Activated B cell treated with CpG ODN at 0.5 μM for 24 hours (primary cell): ENCODE measurements at regions of chr10 and their contacts with region 1.

Region 1: GRCh38 chr10:4656576-4657182 is 169.3 kb upstream of the AKR1E2 start:
- DNase-seq: no peak
- ATAC-seq: peak; percentile 52
- H3K4me3 Mint-ChIP-seq: no peak overlapping the region
- H3K27ac Mint-ChIP-seq: no peak overlapping the region
- H3K4me1 Mint-ChIP-seq: peaks cover 5% of the 10 kb centered on the region
- H3K27me3 Mint-ChIP-seq: peaks cover 2% of the 10 kb centered on the region
- CTCF ChIP-seq: no peak

Region 2: GRCh38 chr10:3197348-3198003 is 1459.2 kb before region 1 on chr10:
- CTCF ChIA-PET with region 1: interaction called, 6 read pairs
- POLR2A ChIA-PET with region 1: no interaction called
- intact Hi-C with region 1: loop called (anchors 1 kb)
- DNase-seq: peak; percentile 27
- ATAC-seq: no peak
- H3K4me3 Mint-ChIP-seq: no peak overlapping the region
- H3K27ac Mint-ChIP-seq: no peak overlapping the region
- H3K4me1 Mint-ChIP-seq: peaks cover 7% of the 10 kb centered on the region
- H3K27me3 Mint-ChIP-seq: peaks cover 35% of the 10 kb centered on the region
- CTCF ChIP-seq: peak; percentile 17

Region 3: GRCh38 chr10:3393958-3394357 is 1262.7 kb before region 1 on chr10:
- CTCF ChIA-PET with region 1: no interaction called
- POLR2A ChIA-PET with region 1: no interaction called
- intact Hi-C with region 1: loop called (anchors 1 kb)
- DNase-seq: no peak
- ATAC-seq: peak; percentile 34
- H3K4me3 Mint-ChIP-seq: no peak overlapping the region
- H3K27ac Mint-ChIP-seq: no peak overlapping the region
- H3K4me1 Mint-ChIP-seq: peaks cover 22% of the 10 kb centered on the region
- H3K27me3 Mint-ChIP-seq: peaks cover 1% of the 10 kb centered on the region
- CTCF ChIP-seq: no peak

Region 4: GRCh38 chr10:3623746-3624145 is 1032.9 kb before region 1 on chr10:
- CTCF ChIA-PET with region 1: no interaction called
- POLR2A ChIA-PET with region 1: no interaction called
- intact Hi-C with region 1: loop called (anchors 10 kb)
- DNase-seq: no peak
- ATAC-seq: peak; percentile 40
- H3K4me3 Mint-ChIP-seq: no peak overlapping the region
- H3K27ac Mint-ChIP-seq: no peak overlapping the region
- H3K4me1 Mint-ChIP-seq: peaks cover 32% of the 10 kb centered on the region
- H3K27me3 Mint-ChIP-seq: no peaks in the 10 kb centered on the region
- CTCF ChIP-seq: no peak

Region 5: DNA sequence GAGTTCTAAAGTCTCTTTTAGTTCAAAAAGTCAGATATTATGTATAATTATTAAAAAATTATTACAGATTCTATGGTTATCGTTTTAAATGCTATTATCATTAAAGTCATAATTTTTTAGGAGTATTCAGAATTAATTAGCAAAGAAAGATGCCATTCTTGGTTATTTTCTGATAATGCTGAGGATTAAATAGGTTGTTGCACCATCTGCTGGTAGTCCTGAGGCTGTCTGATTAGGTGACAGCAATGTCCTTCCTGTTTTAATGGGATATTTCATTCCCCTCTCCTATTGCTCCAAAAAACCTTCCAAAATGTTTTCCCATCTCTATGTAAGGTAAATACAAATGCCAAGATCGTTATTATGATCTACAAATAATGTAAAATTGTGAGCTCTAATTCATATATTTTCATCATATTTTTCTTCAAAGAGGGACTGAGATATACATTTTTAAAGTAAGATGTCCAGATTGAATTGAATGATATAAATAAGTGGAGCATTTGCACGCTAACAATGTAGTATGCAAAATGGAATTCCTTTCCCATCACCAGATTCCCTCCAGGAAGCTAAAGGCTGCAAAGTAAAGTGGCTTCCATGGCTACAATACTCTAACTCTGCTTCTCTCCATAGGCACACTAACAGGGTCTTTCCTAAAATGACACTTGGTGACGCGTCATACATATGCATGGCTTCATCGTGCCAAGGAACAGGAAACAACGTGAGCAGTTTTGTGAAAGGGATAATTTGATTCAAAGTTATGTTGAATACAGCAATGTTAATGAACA is 110.5 kb after region 1 on chr10:
- CTCF ChIA-PET with region 1: interaction called, 3 read pairs
- POLR2A ChIA-PET with region 1: no interaction called
- intact Hi-C with region 1: loop called (anchors 2 kb)
- DNase-seq: no peak
- ATAC-seq: no peak
- H3K4me3 Mint-ChIP-seq: no peak overlapping the region
- H3K27ac Mint-ChIP-seq: no peak overlapping the region
- H3K4me1 Mint-ChIP-seq: no peaks in the 10 kb centered on the region
- H3K27me3 Mint-ChIP-seq: peaks cover 8% of the 10 kb centered on the region
- CTCF ChIP-seq: no peak